Activated naive CD4-positive, alpha-beta T cell treated with anti-CD3 and anti-CD28 coated beads for 36 hours (primary cell): ENCODE measurements at regions of chr17 and their contacts with region 1.

Region 1: DNA sequence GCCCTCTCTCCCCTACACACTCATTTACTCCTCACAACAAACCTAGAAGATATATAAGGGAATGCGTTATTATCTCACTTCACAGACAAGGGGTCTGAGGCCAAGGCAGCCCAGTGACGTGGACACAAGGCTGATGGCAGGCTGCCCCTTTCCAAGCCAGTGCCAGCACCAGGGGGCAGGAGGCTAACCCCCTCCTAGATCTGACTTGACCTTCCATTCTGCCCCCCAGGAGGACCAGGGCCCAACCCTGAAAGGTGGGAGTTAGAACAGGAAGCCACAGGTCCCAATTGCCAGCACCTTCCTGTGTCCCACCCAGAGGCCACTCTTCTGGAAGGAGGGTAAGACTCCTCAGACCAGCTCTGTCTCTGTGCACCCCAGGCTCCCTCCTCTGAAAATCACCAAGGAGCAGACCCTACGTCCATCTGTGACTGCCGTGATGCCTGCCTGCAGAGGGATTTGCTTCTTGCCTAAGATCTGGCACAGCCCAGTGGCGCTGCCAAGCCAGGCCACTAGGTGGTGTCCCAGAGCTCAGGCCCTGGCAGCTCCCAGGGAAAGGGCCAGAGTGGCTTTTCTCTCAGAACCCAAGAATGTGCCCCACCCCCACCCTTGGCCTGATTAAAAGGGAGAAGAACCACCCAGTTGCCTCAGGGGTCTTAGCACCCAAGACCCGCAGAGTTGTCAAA is 42.4 kb upstream of the MRPS23 start:
- DNase-seq: peak; percentile 86
- H3K4me3 Mint-ChIP-seq: no peak overlapping the region
- H3K27ac Mint-ChIP-seq: no peak overlapping the region
- H3K4me1 Mint-ChIP-seq: peaks cover 2% of the 10 kb centered on the region
- H3K27me3 Mint-ChIP-seq: no peaks in the 10 kb centered on the region

Region 2: GRCh38 chr17:57875309-57876115 is 16.8 kb before region 1 on chr17:
- CTCF ChIA-PET with region 1: interaction called, 18 read pairs
- intact Hi-C with region 1: no loop called
- DNase-seq: no peak
- H3K4me3 Mint-ChIP-seq: no peak overlapping the region
- H3K27ac Mint-ChIP-seq: no peak overlapping the region
- H3K4me1 Mint-ChIP-seq: peaks cover 30% of the 10 kb centered on the region
- H3K27me3 Mint-ChIP-seq: peaks cover 5% of the 10 kb centered on the region

Region 3: DNA sequence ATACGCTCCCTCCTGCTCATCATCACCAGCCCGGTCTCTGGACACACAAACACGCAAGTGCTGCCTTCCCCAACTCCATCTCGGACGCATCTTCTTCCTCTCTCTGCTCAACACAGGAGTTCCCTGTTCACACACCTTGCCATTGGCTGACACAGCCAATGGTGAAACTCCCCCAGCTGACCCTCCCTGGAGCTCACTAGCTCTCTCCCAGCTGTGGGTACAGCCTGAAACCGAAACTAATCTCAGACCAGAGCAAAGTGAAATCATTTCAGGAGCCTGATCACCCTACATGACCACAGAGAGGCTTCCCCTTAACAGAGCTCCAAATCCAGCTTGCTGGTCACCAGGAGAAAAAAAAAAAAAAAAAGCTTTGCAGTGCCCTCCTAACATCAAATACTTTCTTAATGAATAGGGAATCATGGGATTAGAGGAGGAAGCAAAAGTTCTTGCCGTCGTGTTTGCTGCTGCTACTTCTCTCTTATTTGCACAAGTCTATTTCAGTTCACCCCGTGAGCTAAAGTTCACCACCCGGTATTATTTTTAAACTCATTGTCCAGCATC is 54.6 kb after region 1 on chr17:
- CTCF ChIA-PET with region 1: interaction called, 13 read pairs
- intact Hi-C with region 1: no loop called
- DNase-seq: peak; percentile 31
- H3K4me3 Mint-ChIP-seq: peak overlapping the region; percentile 20
- H3K27ac Mint-ChIP-seq: no peak overlapping the region
- H3K4me1 Mint-ChIP-seq: peaks cover 34% of the 10 kb centered on the region
- H3K27me3 Mint-ChIP-seq: no peaks in the 10 kb centered on the region

Region 4: DNA sequence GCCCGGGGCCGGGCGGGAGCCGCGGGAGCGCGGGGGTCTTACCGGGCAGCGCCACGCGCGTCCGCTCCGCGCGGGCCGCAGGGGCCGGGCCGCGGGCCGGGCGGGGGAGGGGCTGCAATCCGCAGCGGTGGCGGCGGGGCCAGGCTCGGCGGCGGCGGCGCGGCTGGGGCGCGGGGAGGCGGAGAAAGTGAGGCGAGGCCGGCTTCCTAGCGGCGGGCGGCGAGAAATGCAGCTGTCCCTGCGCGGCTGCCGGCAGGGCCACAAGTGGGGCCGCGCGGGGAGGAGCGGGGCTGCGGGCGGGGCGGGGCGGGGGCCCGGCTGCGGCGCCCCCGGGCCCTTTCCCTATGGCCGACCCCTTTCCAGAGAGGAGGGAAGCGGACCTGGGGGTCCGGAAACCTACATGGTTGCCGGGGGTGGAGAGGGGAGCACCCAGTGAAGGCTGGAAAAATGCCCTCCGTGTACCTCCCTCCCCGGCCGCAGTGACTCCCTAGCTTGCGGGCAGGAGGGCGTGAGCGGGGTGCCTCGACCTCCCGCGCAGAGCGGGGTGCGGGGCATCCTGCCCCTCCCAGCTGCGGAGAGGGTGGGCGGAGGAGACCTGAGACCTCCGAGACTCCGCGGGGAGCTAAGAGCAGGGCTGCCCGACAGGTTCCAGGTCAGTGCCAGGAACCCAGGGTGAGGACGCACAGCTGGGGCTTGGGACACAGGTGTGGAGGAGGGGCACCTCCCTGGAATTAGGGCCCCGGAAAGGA is 63.1 kb after region 1 on chr17 and contains the start of gene CUEDC1:
- CTCF ChIA-PET with region 1: no interaction called
- intact Hi-C with region 1: loop called (anchors 5 kb)
- DNase-seq: peak; percentile 68
- H3K4me3 Mint-ChIP-seq: peak within 1 kb of the TSS; percentile 62
- H3K27ac Mint-ChIP-seq: no peak within 1 kb of the TSS
- H3K4me1 Mint-ChIP-seq: peaks cover 21% of the 10 kb centered on the region
- H3K27me3 Mint-ChIP-seq: peaks cover 29% of the 10 kb centered on the region
- total RNA-seq, gene CUEDC1: 0.47 to 0.69 TPM

Region 5: GRCh38 chr17:57995076-57995956 is 103.0 kb after region 1 on chr17:
- CTCF ChIA-PET with region 1: interaction called, 10 read pairs
- intact Hi-C with region 1: loop called (anchors 1 kb)
- DNase-seq: peak; percentile 80
- H3K4me3 Mint-ChIP-seq: peak overlapping the region; percentile 14
- H3K27ac Mint-ChIP-seq: peak overlapping the region; percentile 68
- H3K4me1 Mint-ChIP-seq: peaks cover 70% of the 10 kb centered on the region
- H3K27me3 Mint-ChIP-seq: no peaks in the 10 kb centered on the region

Region 6: DNA sequence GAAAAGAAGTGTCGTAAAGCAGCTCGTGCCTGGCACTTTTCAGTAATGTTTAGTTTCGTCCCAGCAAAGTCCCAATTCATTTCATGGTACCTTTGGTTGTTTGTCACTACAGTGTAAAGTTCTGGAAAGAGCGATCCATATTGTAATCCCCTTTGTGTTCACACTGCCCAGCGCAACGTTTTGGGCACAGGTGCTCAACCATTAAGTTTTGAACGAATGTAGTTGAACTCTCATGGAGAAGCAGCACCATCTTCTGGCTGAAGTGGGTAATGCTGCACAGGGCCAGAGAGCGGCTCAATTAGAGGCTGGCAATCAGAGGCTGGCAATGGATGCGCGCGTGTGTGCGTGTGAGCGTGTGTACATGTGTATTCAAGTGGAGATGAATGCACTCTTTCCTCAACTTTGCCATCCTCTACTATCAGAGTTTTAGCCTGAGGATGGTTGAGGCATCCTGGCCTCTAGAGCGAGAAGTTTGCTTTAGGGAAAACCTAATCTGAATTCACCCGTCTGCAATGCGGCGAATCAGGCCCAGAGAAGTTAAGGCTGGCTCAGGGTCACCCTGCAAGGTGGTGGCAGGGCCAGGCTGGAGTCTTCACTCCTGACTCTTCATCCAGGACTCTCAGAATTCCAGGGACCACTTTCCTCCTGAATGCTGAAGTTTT is 220.8 kb after region 1 on chr17:
- CTCF ChIA-PET with region 1: interaction called, 12 read pairs
- intact Hi-C with region 1: loop called (anchors 1 kb)
- DNase-seq: peak; percentile 94
- H3K4me3 Mint-ChIP-seq: no peak overlapping the region
- H3K27ac Mint-ChIP-seq: no peak overlapping the region
- H3K4me1 Mint-ChIP-seq: no peaks in the 10 kb centered on the region
- H3K27me3 Mint-ChIP-seq: no peaks in the 10 kb centered on the region